Activated CD4-positive, alpha-beta memory T cell treated with anti-CD3 and anti-CD28 coated beads for 36 hours (primary cell): ENCODE measurements at regions of chr5 and their contacts with region 1.

Region 1: GRCh38 chr5:132272311-132273210 is 15.1 kb downstream of the PDLIM4 start:
- DNase-seq: peak; percentile 81
- H3K4me3 Mint-ChIP-seq: no peak overlapping the region
- H3K27ac Mint-ChIP-seq: no peak overlapping the region
- H3K4me1 Mint-ChIP-seq: peaks cover 8% of the 10 kb centered on the region
- H3K27me3 Mint-ChIP-seq: peaks cover 12% of the 10 kb centered on the region

Region 2: GRCh38 chr5:132369474-132370180 is 97.1 kb after region 1 on chr5 and contains the start of gene SLC22A5:
- CTCF ChIA-PET with region 1: interaction called, 15 read pairs
- POLR2A ChIA-PET with region 1: no interaction called
- intact Hi-C with region 1: loop called (anchors 1 kb)
- DNase-seq: peak; percentile 79
- H3K4me3 Mint-ChIP-seq: peak within 1 kb of the TSS; percentile 76
- H3K27ac Mint-ChIP-seq: peak within 1 kb of the TSS; percentile 42
- H3K4me1 Mint-ChIP-seq: peaks cover 24% of the 10 kb centered on the region
- H3K27me3 Mint-ChIP-seq: no peaks in the 10 kb centered on the region
- total RNA-seq, gene SLC22A5: 2.8 to 3.6 TPM